Activated CD8-positive, alpha-beta T cell treated with anti-CD3 and anti-CD28 coated beads for 36 hours (primary cell): ENCODE measurements at regions of chr16 and their contacts with region 1.

Region 1: GRCh38 chr16:67447508-67448076 is 16.7 kb downstream of the HSD11B2 start:
- DNase-seq: peak; percentile 88
- ATAC-seq: peak; percentile 99
- H3K4me3 Mint-ChIP-seq: no peak overlapping the region
- H3K27ac Mint-ChIP-seq: no peak overlapping the region
- H3K4me1 Mint-ChIP-seq: no peaks in the 10 kb centered on the region
- H3K27me3 Mint-ChIP-seq: no peaks in the 10 kb centered on the region
- CTCF ChIP-seq: peak; percentile 66

Region 2: DNA sequence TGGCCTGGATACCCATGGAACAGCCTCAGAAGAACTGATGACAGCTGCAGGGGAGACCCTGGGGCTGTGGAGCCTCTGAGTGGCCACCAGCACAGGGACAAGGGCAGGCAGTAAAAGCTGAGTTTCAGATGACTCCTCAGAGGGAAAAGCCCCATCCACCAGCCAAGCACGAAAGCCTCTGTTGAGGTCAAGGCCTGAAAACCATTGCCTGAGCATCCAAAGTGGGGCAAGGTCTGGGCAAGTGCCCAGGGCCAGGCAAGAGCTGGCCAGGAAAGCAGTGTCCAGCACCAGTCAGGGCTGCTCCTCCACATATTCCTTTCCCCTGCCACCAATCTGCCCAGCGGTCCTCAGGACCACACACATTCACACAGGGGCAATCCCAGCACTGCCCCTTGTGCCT is 17.0 kb after region 1 on chr16:
- CTCF ChIA-PET with region 1: interaction called, 31 read pairs
- POLR2A ChIA-PET with region 1: interaction called, 3 read pairs
- intact Hi-C with region 1: no loop called
- DNase-seq: no peak
- ATAC-seq: no peak
- H3K4me3 Mint-ChIP-seq: no peak overlapping the region
- H3K27ac Mint-ChIP-seq: no peak overlapping the region
- H3K4me1 Mint-ChIP-seq: peaks cover 12% of the 10 kb centered on the region
- H3K27me3 Mint-ChIP-seq: no peaks in the 10 kb centered on the region
- CTCF ChIP-seq: no peak

Region 3: GRCh38 chr16:67470359-67470758 is 22.8 kb after region 1 on chr16:
- CTCF ChIA-PET with region 1: interaction called, 31 read pairs
- POLR2A ChIA-PET with region 1: no interaction called
- intact Hi-C with region 1: no loop called
- DNase-seq: no peak
- ATAC-seq: no peak
- H3K4me3 Mint-ChIP-seq: no peak overlapping the region
- H3K27ac Mint-ChIP-seq: no peak overlapping the region
- H3K4me1 Mint-ChIP-seq: peaks cover 32% of the 10 kb centered on the region
- H3K27me3 Mint-ChIP-seq: no peaks in the 10 kb centered on the region
- CTCF ChIP-seq: no peak

Region 4: DNA sequence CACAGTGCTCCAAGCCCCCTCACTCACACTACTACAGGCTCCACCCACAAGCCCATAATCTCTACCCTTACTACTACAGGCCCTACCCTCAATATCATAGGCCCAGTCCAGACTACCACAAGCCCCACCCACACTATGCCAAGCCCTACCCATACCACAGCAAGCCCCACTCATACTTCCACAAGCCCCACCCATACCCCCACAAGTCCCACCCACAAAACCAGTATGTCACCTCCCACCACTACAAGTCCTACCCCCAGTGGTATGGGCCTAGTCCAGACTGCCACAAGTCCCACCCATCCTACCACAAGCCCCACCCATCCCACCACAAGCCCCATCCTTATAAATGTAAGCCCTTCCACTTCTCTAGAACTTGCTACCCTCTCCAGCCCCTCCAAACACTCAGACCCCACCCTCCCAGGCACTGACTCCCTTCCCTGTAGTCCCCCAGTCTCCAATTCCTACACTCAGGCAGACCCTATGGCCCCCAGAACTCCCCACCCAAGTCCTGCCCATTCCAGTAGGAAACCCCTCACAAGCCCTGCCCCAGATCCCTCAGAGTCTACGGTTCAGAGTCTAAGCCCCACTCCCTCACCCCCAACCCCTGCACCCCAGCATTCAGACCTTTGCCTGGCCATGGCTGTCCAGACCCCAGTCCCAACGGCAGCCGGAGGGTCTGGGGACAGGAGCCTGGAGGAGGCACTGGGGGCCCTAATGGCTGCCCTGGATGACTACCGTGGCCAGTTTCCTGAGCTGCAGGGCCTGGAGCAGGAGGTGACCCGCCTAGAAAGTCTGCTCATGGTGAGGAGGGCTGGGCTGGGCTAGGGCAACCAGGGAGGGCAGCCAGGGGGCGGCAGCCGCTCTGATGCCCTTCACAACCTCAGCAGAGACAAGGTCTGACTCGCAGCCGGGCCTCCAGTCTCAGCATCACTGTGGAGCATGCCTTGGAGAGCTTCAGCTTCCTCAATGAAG is 95.2 kb after region 1 on chr16:
- CTCF ChIA-PET with region 1: no interaction called
- POLR2A ChIA-PET with region 1: no interaction called
- intact Hi-C with region 1: no loop called
- DNase-seq: peak; percentile 87
- ATAC-seq: peak; percentile 91
- H3K4me3 Mint-ChIP-seq: no peak overlapping the region
- H3K27ac Mint-ChIP-seq: peak overlapping the region; percentile 25
- H3K4me1 Mint-ChIP-seq: peaks cover 40% of the 10 kb centered on the region
- H3K27me3 Mint-ChIP-seq: no peaks in the 10 kb centered on the region
- CTCF ChIP-seq: no peak